Psoas muscle (tissue), 8 donors: ENCODE measurements at regions of chr10 and their contacts with region 1.

Region 1: GRCh38 chr10:124732931-124733570 is 11.1 kb downstream of the FAM53B start:
- DNase-seq: peak; percentile 78 to 90
- ATAC-seq: peak; percentile 63 to 71 (median 69)
- H3K4me3 ChIP-seq: peak overlapping the region; percentile 32
- H3K27ac ChIP-seq: peak overlapping the region; percentile 95
- H3K4me1 ChIP-seq: peaks cover 92% of the 10 kb centered on the region
- H3K27me3 ChIP-seq: no peaks in the 10 kb centered on the region
- CTCF ChIP-seq: no peak

Region 2: DNA sequence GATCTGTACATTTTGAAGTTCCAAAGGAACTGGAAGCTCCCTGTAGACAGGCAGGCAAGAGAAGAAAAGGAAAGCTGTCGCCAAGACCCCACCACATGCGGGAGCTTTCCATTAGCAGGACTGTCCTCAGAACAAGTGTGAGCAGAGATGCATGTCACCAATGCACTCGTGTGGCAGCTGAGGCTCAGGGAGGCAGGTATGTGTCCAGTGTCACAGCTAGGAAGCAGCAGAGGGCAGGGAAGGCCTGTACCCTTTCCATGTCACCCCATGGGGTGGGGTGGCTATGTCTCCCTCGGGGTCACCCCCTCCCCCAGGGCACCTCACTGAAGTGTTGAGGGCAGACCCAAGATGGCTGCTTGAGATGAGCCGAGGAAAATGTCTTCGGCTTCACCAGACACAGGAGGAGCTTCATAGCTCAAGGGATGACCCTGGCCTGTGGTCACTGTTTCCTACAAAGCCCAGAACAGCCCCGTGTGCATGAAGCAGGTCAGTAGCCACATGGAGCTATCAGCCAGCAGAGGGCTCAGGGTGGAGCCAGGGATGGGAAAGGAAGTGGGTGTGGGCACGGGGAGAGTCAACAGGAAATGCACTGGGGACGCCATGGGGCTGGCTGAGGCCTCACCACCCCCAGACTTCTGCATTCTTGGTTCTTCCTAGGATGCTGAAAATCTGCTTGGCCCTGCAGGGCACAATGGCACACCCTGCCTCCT is 85.5 kb before region 1 on chr10:
- intact Hi-C with region 1: loop called in 1 of 2 experiments (anchors 5 kb)
- DNase-seq: peak; percentile 59 to 75
- ATAC-seq: peak; percentile 17 to 52 (median 42)
- H3K4me3 ChIP-seq: no peak overlapping the region
- H3K27ac ChIP-seq: peak overlapping the region; percentile 84
- H3K4me1 ChIP-seq: peaks cover 80% of the 10 kb centered on the region
- H3K27me3 ChIP-seq: no peaks in the 10 kb centered on the region
- CTCF ChIP-seq: no peak

Region 3: DNA sequence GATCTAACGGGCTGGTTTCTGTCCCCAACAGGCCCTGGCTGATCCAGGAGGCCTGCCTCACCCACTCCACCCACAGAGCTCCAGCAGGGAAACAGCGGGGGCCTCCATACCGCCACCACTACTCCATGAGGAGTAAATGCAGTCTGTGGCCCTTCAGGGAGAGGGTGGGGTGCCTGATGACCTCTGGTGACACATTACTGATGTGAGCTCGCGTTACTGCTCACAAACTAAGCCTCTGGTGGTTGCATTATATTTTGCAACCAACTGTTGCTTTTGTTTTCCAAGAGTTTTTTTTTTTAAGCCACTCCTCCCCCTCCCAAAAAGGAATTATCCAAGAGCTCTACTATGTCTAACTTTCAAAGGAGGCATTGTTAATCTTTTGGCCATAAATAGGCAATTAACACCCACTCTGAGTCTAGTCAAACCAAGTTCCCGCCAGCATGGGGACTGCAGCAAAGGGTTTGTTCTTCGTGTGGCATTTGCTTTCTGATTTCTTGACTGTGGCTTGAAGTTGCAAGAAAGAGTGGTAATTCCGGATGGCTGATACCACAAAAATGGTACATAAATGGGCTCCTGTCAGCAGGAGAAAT is 61.5 kb before region 1 on chr10:
- intact Hi-C with region 1: no loop called
- DNase-seq: peak; percentile 70 to 86
- ATAC-seq: peak; percentile 48 to 72 (median 70)
- H3K4me3 ChIP-seq: no peak overlapping the region
- H3K27ac ChIP-seq: peak overlapping the region; percentile 58
- H3K4me1 ChIP-seq: peaks cover 87% of the 10 kb centered on the region
- H3K27me3 ChIP-seq: no peaks in the 10 kb centered on the region
- CTCF ChIP-seq: peak; percentile 29

Region 4: GRCh38 chr10:124688889-124689670 is 44.0 kb before region 1 on chr10:
- intact Hi-C with region 1: loop called in 1 of 2 experiments (anchors 10 kb)
- DNase-seq: peak in 1 of 2 donors; percentile 77
- ATAC-seq: peak in 3 of 4 donors; percentile 49 to 70 (median 55)
- H3K4me3 ChIP-seq: no peak overlapping the region
- H3K27ac ChIP-seq: peak overlapping the region; percentile 70
- H3K4me1 ChIP-seq: peaks cover 79% of the 10 kb centered on the region
- H3K27me3 ChIP-seq: no peaks in the 10 kb centered on the region
- CTCF ChIP-seq: no peak

Region 5: GRCh38 chr10:124701435-124701834 is 31.6 kb before region 1 on chr10:
- intact Hi-C with region 1: loop called in 1 of 2 experiments (anchors 5 kb)
- DNase-seq: peak; percentile 93 to 95
- ATAC-seq: peak; percentile 69 to 77 (median 74)
- H3K4me3 ChIP-seq: no peak overlapping the region
- H3K27ac ChIP-seq: peak overlapping the region; percentile 92
- H3K4me1 ChIP-seq: peaks cover 99% of the 10 kb centered on the region
- H3K27me3 ChIP-seq: no peaks in the 10 kb centered on the region
- CTCF ChIP-seq: no peak

Region 6: GRCh38 chr10:125538947-125539731 is 806.1 kb after region 1 on chr10:
- intact Hi-C with region 1: no loop called
- DNase-seq: no peak
- ATAC-seq: peak; percentile 25 to 79 (median 35)
- H3K4me3 ChIP-seq: no peak overlapping the region
- H3K27ac ChIP-seq: no peak overlapping the region
- H3K4me1 ChIP-seq: no peaks in the 10 kb centered on the region
- H3K27me3 ChIP-seq: peaks cover 0 to 7% (median 0%) of the 10 kb centered on the region in 3 donors
- CTCF ChIP-seq: no peak